Activated B cell treated with CpG ODN at 0.5 μM for 24 hours (primary cell): ENCODE measurements at regions of chr1 and their contacts with region 1.

Region 1: GRCh38 chr1:234154320-234155251 is 218.7 kb upstream of the COA6 start:
- DNase-seq: no peak
- ATAC-seq: no peak
- H3K4me3 Mint-ChIP-seq: no peak overlapping the region
- H3K27ac Mint-ChIP-seq: no peak overlapping the region
- H3K4me1 Mint-ChIP-seq: no peaks in the 10 kb centered on the region
- H3K27me3 Mint-ChIP-seq: peaks cover 2% of the 10 kb centered on the region
- CTCF ChIP-seq: no peak

Region 2: DNA sequence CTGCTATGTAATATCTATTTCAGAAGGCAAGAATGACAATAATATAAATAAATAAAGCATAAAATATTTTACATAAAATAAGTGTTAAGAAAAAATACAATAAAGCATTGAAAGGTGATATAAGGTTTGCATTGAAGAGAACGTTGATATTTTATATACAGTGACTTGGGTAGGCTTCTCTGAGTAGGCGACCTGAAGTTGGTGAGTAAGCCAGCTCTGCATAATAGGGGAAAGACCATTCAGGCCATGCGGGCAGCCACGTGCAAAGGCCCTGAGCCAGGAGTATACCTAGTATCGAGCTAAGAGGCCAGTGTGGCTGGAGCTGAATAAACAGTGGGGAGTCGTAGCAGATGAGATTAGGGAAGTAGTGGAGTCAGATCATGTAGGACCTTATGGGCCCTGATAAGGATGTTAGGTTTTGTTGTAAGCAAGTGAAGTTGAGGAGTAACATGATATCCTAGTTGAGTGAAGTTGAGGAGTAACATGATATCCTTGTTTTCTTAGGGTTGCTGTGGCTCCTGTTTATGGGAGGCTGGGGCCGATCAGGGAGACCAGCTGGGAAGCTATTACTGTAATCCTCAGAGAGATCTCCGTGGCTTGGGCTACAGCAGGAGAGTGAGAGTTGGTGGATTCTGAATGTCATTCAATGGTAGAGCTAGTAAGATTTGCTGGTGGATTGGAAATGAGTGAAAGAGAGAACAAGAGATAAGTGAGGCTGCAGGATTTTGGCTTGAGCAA is 518.7 kb before region 1 on chr1:
- CTCF ChIA-PET with region 1: no interaction called
- POLR2A ChIA-PET with region 1: no interaction called
- intact Hi-C with region 1: no loop called
- DNase-seq: no peak
- ATAC-seq: no peak
- H3K4me3 Mint-ChIP-seq: no peak overlapping the region
- H3K27ac Mint-ChIP-seq: no peak overlapping the region
- H3K4me1 Mint-ChIP-seq: no peaks in the 10 kb centered on the region
- H3K27me3 Mint-ChIP-seq: peaks cover 3% of the 10 kb centered on the region
- CTCF ChIP-seq: no peak

Region 3: DNA sequence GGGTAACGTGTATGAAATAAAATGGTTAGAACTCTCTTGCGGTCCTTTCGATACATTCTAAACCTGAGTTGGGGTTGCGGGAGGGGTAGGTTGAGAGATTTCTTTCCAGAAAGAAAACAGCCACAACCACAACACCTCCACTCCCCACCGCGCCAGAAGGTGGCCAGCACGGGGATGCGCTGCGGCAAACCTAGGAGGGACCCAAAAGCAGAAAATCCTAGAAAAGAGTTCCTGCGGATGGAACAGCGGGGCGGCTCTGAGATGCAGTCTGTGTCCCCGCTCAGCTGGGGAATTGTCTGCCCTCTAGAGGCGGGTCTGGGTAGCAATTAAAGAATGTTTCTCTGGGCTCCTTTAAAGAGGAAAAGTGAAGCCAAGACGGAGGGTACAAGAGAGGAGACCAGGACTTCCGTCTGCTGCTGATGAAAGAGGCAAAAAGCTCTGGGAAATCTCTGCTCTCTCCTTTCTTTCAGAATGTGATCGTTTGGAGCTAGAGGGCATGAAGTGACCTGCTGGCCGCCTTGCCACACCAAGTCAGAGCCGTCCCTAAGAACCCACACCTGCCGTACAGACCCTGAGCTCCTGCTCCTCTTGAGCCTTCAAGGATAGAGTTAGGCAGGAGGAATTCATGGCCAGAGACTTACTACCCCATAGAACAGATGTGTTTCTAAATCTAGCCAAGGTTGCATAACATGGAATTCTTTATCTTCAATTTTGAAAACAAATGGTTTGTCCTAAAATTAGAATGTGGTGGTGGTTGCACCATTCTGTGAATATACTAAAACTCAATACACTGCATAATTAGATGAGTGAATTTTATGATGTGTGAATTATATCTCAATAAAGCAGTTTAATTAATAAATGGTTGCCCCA is 172.1 kb after region 1 on chr1:
- CTCF ChIA-PET with region 1: no interaction called
- POLR2A ChIA-PET with region 1: no interaction called
- intact Hi-C with region 1: loop called (anchors 1 kb)
- DNase-seq: peak; percentile 35
- ATAC-seq: peak; percentile 79
- H3K4me3 Mint-ChIP-seq: peak overlapping the region; percentile 86
- H3K27ac Mint-ChIP-seq: peak overlapping the region; percentile 47
- H3K4me1 Mint-ChIP-seq: peaks cover 39% of the 10 kb centered on the region
- H3K27me3 Mint-ChIP-seq: peaks cover 13% of the 10 kb centered on the region
- CTCF ChIP-seq: peak; percentile 34